Brain microvascular endothelial cell (primary cell): ENCODE measurements at regions of chr18 and their contacts with region 1.

Region 1: GRCh38 chr18:3665780-3666525 is 216.0 kb downstream of the TGIF1 start:
- DNase-seq: peak; percentile 85
- H3K4me3 ChIP-seq: peak overlapping the region; percentile 13
- H3K27ac ChIP-seq: peak overlapping the region; percentile 49
- H3K27me3 ChIP-seq: no peaks in the 10 kb centered on the region
- CTCF ChIP-seq: peak; percentile 92

Region 2: DNA sequence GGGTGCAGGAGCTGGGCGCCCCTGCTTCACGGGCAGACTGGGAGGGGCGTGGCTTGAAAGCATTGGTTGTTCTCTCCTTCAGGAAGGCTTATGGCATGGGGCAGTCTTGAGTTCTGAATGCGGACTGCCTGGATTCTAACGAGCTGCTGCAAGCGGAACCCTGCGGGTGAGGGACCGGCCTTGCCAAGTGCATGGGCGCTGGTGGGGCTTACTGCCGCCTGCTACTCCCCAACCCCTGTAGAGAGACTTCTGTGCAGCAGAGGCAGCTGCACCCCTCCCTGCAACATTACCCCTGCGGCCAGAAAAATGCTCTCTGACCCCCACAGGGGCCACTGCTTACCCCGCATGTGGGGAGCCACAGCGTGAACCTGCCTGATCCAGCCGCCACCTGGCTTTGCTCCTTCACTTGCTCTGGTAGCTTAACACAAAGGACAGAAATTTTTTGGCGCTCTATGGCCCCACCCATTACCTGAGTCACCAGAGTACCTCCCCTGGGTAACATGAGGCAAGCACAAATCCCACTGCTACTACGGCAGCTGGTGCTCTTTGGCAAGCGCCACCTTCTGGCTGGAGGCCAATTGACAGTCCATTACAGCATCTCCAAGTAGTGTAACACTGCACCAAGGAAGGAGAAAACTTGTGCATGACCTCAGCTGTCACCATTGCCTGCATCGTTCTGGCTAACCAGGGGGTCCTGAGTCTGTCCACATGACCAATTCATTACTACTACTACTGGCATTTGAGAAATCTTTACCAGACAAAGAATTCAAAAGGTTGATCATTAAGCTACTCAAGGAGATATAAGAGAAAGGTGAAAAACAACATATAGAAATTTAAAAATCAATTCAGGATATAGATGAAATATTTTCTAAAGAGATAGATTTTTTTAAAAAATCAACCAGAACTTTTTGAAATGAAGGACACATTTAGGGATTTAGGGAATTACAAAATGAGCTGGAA is 368.6 kb before region 1 on chr18:
- in situ Hi-C with region 1: loop called (anchors 25 kb)
- DNase-seq: peak; percentile 96
- H3K4me3 ChIP-seq: peak overlapping the region; percentile 86
- H3K27ac ChIP-seq: peak overlapping the region; percentile 26
- H3K27me3 ChIP-seq: no peaks in the 10 kb centered on the region
- CTCF ChIP-seq: peak; percentile 82

Region 3: GRCh38 chr18:3481696-3482210 is 184.2 kb before region 1 on chr18:
- in situ Hi-C with region 1: no loop called
- DNase-seq: no peak
- H3K4me3 ChIP-seq: no peak overlapping the region
- H3K27ac ChIP-seq: no peak overlapping the region
- H3K27me3 ChIP-seq: no peaks in the 10 kb centered on the region
- CTCF ChIP-seq: peak; percentile 79

Region 4: DNA sequence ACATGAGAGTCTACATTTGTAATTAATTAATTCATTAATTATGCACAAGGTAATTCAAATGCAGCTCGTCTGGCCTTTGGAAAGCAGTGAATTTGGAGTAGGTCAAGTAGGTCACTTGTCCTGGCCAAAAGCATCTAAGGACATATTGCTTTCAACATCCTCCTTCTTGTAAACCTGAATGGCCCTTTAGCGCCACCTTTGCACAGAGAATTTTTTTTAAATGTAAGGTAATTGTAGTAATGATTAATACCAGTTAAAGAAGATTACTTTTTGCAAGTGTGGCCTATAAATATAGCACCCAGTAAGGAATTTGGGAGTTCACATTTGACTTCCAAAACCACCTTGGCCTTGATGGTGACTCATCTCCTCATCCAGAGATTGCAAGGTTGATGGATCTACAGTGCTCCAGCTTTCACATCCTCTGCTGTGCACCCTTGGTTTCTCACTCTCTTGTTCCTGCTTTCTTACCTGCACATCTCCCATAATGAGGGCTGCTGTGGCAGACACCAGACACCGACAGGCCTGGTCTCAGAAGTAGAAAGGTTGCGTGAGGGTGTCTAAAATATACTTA is 265.7 kb after region 1 on chr18:
- in situ Hi-C with region 1: no loop called
- DNase-seq: no peak
- H3K4me3 ChIP-seq: no peak overlapping the region
- H3K27ac ChIP-seq: no peak overlapping the region
- H3K27me3 ChIP-seq: no peaks in the 10 kb centered on the region
- CTCF ChIP-seq: no peak